ENCODE measurements at regions of chr1 and their contacts with region 1.

Region 1: GRCh38 chr1:39086865-39087409 is 60.8 kb downstream of the NDUFS5 start:
- DNase-seq: no peak

Region 2: GRCh38 chr1:39026051-39026865 is 60.7 kb before region 1 on chr1 and contains the start of gene NDUFS5:
- intact Hi-C with region 1: loop called (anchors 5 kb)
- DNase-seq: peak; percentile 94
- total RNA-seq, gene NDUFS5: 519 TPM